CD4-positive, alpha-beta memory T cell (primary cell): ENCODE measurements at regions of chr12 and their contacts with region 1.

Region 1: DNA sequence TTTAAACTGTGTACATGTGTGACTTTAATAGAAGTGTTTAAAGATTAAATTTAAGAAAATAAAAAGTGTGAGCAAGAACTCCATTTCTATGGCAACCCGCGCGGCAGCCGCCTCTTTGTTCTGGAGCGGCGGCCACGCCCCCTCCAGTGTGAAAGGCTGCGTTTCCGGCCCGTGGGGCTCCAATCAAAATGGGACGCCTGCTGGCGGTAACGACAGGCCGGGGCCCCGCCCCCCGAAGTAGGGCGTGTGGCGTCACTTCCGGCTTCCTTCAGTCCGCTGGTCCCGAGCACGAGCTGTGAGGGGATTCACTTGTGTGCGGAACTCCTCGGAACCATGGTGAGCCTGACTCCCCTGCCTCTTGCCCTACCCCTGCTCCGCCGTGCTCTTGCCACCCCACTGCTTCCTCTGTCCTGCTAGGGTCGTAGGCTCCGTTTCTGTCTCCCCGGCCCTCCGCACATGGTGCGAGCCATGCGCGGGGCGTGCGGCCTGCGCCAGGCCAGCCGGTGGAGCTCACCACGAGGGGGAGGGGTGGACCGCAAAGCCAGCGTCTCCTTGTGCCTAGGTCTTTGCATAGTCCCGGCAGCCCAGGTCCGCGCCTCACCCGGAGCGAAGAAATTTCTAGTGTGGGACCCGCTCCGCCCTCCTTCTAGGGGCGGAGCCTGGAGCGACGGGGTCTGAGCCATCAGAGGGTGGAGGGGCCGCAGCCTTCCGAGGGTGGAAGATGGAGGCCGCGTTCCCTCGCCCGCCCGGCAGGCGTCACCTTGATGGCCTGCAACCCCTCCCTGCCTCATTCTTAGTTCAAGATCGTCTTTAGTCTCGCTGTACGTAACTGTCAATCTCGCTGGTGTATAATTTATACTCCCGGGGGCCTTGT is at the start of gene CCT2:
- DNase-seq: peak; percentile 91 to 96 (median 96)
- H3K4me3 ChIP-seq: peak within 1 kb of the TSS; percentile 90 to 93
- H3K4me3 Mint-ChIP-seq: peak within 1 kb of the TSS; percentile 94 to 97 (median 95)
- H3K27ac ChIP-seq: peak within 1 kb of the TSS; percentile 95
- H3K27ac Mint-ChIP-seq: peak within 1 kb of the TSS; percentile 96 to 99 (median 98)
- H3K4me1 ChIP-seq: peaks cover 16% of the 10 kb centered on the region
- H3K4me1 Mint-ChIP-seq: peaks cover 5 to 19% (median 10%) of the 10 kb centered on the region in 4 donors
- H3K27me3 ChIP-seq: no peaks in the 10 kb centered on the region
- H3K27me3 Mint-ChIP-seq: no peaks in the 10 kb centered on the region
- total RNA-seq, gene CCT2: 92.6 to 104 TPM

Region 2: DNA sequence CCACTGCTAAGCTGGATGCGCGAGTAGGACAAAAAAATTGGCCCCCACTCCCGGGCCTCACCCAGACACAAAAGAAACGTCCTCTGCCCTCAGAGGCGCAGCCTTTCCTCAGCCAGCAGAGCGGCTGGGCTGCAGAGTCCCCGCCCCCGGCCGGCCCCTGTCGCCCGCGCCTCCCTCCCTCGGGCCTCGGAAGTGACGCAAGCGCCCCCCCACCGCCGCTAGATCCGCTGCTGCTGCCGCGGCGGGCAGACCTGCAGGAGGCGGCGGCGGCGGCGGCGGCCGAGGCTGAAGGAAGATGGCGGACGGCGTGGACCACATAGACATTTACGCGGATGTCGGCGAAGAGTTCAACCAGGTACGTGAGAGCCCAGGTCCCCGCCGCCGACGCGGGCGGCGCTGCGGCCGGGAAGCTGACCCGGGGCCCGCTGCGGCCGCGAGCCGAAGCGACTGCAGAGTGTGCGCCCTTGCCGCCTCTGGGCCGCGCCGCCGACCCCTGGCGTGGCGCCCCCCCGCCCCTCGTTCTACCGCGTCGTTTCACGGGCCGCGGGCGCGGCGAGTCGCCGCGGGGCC is 346.0 kb before region 1 on chr12 and contains the start of gene CPSF6:
- CTCF ChIA-PET with region 1: no interaction called
- POLR2A ChIA-PET with region 1: no interaction called
- intact Hi-C with region 1: loop called (anchors 1 kb)
- DNase-seq: peak; percentile 95 to 96 (median 95)
- H3K4me3 ChIP-seq: peak within 1 kb of the TSS; percentile 60 to 94
- H3K4me3 Mint-ChIP-seq: peak within 1 kb of the TSS; percentile 96 to 100 (median 98)
- H3K27ac ChIP-seq: peak within 1 kb of the TSS; percentile 89
- H3K27ac Mint-ChIP-seq: peak within 1 kb of the TSS; percentile 98 to 100 (median 99)
- H3K4me1 ChIP-seq: peaks cover 52% of the 10 kb centered on the region
- H3K4me1 Mint-ChIP-seq: peaks cover 36 to 57% (median 47%) of the 10 kb centered on the region in 4 donors
- H3K27me3 ChIP-seq: no peaks in the 10 kb centered on the region
- H3K27me3 Mint-ChIP-seq: no peaks in the 10 kb centered on the region
- total RNA-seq, gene CPSF6: 109 to 120 TPM

Region 3: DNA sequence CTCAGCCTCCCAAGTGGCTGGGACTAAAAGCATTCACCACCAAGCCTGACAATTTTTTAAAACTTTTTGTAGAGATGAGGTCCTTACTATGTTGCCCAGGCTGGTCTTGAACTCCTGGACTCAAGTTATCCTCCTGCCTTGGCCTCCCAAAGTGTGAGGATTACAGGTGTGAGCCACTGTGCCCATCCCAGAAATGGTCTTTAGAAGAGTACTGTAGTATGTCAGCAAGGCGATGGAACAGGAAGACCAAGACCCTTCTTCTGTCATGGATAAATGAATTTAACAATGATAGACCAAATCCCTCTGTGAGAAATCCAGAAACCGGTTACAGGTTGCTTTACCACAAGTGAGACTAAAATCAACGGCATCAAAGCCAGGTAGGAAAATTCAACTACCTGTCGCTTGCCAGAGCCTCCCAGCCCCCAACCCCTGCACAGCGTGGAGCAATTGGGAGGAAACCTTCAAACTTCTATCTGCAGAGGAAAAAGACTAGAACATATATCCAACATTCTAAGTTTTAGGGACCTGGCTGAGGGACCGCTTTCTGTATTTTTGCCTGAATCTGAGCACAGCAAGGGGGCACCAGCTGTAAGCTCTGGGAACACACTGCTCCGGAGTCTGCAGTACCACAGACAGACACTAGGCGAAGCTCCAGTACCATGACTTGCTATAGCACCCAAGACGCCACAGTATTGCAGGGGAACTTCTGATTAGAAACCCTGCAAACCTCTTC is 294.7 kb before region 1 on chr12:
- CTCF ChIA-PET with region 1: interaction called, 6 read pairs
- POLR2A ChIA-PET with region 1: interaction called, 4 read pairs
- intact Hi-C with region 1: loop called (anchors 5 kb)
- DNase-seq: peak; percentile 72 to 76 (median 74)
- H3K4me3 ChIP-seq: no peak overlapping the region
- H3K4me3 Mint-ChIP-seq: peak overlapping the region in 1 of 8 donors; percentile 30
- H3K27ac ChIP-seq: no peak overlapping the region
- H3K27ac Mint-ChIP-seq: peak overlapping the region in 1 of 7 donors; percentile 49
- H3K4me1 ChIP-seq: no peaks in the 10 kb centered on the region
- H3K4me1 Mint-ChIP-seq: peaks cover 6 to 9% (median 7%) of the 10 kb centered on the region in 4 donors
- H3K27me3 ChIP-seq: peaks cover 5% of the 10 kb centered on the region
- H3K27me3 Mint-ChIP-seq: peaks cover 25 to 29% of the 10 kb centered on the region in 2 donors

Region 4: DNA sequence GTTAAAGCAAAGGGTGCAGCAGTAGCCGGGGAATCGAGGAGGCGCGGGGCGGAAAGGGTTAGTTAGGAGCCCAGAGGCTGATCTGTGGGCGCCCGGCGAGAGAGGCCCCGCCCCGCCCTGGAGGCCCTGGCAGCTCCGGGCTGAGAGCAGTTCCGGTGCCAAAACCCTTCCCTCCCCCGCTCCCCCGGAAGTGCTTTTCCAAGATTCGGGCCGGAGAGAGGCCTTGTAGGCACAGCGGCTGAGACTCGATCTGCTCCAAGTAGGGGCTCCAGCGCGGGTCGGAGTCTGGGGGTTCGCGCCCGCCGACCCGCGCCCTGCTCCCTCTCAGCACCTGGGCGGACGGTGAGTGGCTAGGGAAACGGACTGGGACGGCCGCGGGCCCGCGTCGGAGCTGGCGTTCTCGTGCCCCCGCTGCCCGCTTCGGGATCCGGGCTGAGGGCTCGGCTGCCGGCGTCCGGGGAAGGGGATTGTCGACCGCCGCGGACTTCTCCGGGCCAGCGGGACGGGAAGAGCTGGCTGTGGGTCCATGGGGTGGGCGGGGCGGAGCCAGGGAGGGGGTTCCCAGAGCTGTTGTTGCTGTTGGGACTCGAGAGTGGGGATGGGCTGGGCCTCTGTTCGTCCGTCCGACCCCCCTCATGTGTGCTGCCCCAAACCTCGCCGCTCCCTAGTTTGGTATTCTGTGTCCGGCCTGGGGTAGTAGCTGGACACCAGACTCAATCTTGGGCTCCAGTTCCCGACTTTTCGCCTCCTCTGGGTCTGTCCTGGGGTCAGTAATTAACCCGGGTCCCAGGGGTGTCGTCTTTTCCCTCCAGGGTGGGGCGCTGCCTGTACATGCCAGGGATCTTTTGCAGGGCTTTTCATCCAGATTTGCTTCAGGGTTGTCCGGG is 115.0 kb before region 1 on chr12 and contains the start of gene FRS2:
- CTCF ChIA-PET with region 1: no interaction called
- POLR2A ChIA-PET with region 1: interaction called, 12 read pairs
- intact Hi-C with region 1: loop called (anchors 1 kb)
- DNase-seq: peak; percentile 78 to 87 (median 80)
- H3K4me3 ChIP-seq: peak within 1 kb of the TSS; percentile 71
- H3K4me3 Mint-ChIP-seq: peak within 1 kb of the TSS; percentile 96 to 99 (median 98)
- H3K27ac ChIP-seq: peak within 1 kb of the TSS; percentile 89
- H3K27ac Mint-ChIP-seq: peak within 1 kb of the TSS; percentile 81 to 99 (median 98)
- H3K4me1 ChIP-seq: peaks cover 42% of the 10 kb centered on the region
- H3K4me1 Mint-ChIP-seq: peaks cover 31 to 55% (median 45%) of the 10 kb centered on the region in 4 donors
- H3K27me3 ChIP-seq: no peaks in the 10 kb centered on the region
- H3K27me3 Mint-ChIP-seq: no peaks in the 10 kb centered on the region
- total RNA-seq, gene FRS2: 21.2 to 22.2 TPM

Region 5: DNA sequence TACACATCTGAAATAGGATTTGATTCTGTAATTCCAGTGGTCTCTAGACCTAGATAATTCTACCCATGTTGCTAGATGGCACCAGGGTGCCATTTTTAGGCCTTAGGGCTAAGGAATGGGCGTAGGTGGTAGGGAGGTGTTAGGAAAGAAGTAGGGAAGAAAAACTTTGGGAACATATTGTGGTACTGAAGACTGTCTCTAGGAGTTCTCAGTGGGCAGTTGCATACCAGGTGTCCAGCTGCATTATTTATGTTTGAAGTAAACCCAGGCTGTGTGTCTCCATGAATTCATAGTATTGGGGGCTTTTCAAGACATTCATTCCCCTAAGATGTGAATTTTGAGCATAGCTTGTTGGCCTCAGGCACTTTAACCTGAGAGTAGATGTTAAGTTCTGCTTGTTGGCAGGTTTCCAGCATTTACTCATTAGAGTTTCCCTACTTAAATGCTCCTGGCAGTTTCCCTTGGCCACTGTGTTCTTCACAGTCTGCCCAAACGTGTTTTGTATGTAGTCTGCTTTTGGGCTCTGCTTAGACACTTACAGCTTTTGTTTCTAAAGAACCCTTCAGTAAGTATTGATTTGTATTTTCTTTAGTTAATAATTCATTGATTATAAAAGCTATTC is 31.7 kb before region 1 on chr12:
- CTCF ChIA-PET with region 1: no interaction called
- POLR2A ChIA-PET with region 1: no interaction called
- intact Hi-C with region 1: loop called (anchors 1 kb)
- DNase-seq: no peak
- H3K4me3 ChIP-seq: no peak overlapping the region
- H3K4me3 Mint-ChIP-seq: no peak overlapping the region
- H3K27ac ChIP-seq: no peak overlapping the region
- H3K27ac Mint-ChIP-seq: peak overlapping the region in 1 of 7 donors; percentile 4
- H3K4me1 ChIP-seq: no peaks in the 10 kb centered on the region
- H3K4me1 Mint-ChIP-seq: peaks cover 0 to 5% (median 2%) of the 10 kb centered on the region in 4 donors
- H3K27me3 ChIP-seq: no peaks in the 10 kb centered on the region
- H3K27me3 Mint-ChIP-seq: no peaks in the 10 kb centered on the region

Region 6: GRCh38 chr12:69570545-69571399 is 14.7 kb before region 1 on chr12:
- CTCF ChIA-PET with region 1: interaction called, 55 read pairs
- POLR2A ChIA-PET with region 1: interaction called, 5 read pairs
- intact Hi-C with region 1: loop called (anchors 1 kb)
- DNase-seq: peak; percentile 59 to 76 (median 66)
- H3K4me3 ChIP-seq: no peak overlapping the region
- H3K4me3 Mint-ChIP-seq: no peak overlapping the region
- H3K27ac ChIP-seq: peak overlapping the region; percentile 39
- H3K27ac Mint-ChIP-seq: peak overlapping the region in 5 of 7 donors; percentile 24 to 71 (median 50)
- H3K4me1 ChIP-seq: no peaks in the 10 kb centered on the region
- H3K4me1 Mint-ChIP-seq: peaks cover 0 to 4% (median 2%) of the 10 kb centered on the region in 4 donors
- H3K27me3 ChIP-seq: no peaks in the 10 kb centered on the region
- H3K27me3 Mint-ChIP-seq: no peaks in the 10 kb centered on the region

Region 7: GRCh38 chr12:69662764-69663163 is 77.3 kb after region 1 on chr12:
- CTCF ChIA-PET with region 1: no interaction called
- POLR2A ChIA-PET with region 1: no interaction called
- intact Hi-C with region 1: no loop called
- DNase-seq: no peak
- H3K4me3 ChIP-seq: no peak overlapping the region
- H3K4me3 Mint-ChIP-seq: no peak overlapping the region
- H3K27ac ChIP-seq: no peak overlapping the region
- H3K27ac Mint-ChIP-seq: no peak overlapping the region
- H3K4me1 ChIP-seq: no peaks in the 10 kb centered on the region
- H3K4me1 Mint-ChIP-seq: no peaks in the 10 kb centered on the region
- H3K27me3 ChIP-seq: no peaks in the 10 kb centered on the region
- H3K27me3 Mint-ChIP-seq: peaks cover 5 to 12% of the 10 kb centered on the region in 2 donors